AG04449 (cell line): ENCODE measurements at regions of chr13 and their contacts with region 1.

Region 1: GRCh38 chr13:72839831-72840426 is 58.0 kb downstream of the PIBF1 start:
- DNase-seq: no peak
- H3K4me3 ChIP-seq: no peak overlapping the region
- CTCF ChIP-seq: peak; percentile 68

Region 2: GRCh38 chr13:72850959-72851677 is 11.2 kb after region 1 on chr13:
- CTCF ChIA-PET with region 1: interaction called, 29 read pairs
- POLR2A ChIA-PET with region 1: no interaction called
- DNase-seq: no peak
- H3K4me3 ChIP-seq: no peak overlapping the region
- CTCF ChIP-seq: no peak

Region 3: GRCh38 chr13:73698859-73699258 is 858.9 kb after region 1 on chr13:
- CTCF ChIA-PET with region 1: interaction called, 12 read pairs
- POLR2A ChIA-PET with region 1: no interaction called
- DNase-seq: no peak
- H3K4me3 ChIP-seq: no peak overlapping the region
- CTCF ChIP-seq: no peak